Activated CD4-positive, alpha-beta memory T cell treated with anti-CD3 and anti-CD28 coated beads for 36 hours (primary cell): ENCODE measurements at regions of chr14 and their contacts with region 1.

Region 1: GRCh38 chr14:24160850-24161804 is at the start of gene IRF9:
- DNase-seq: peak; percentile 99
- H3K4me3 Mint-ChIP-seq: peak within 1 kb of the TSS; percentile 97
- H3K27ac Mint-ChIP-seq: peak within 1 kb of the TSS; percentile 100
- H3K4me1 Mint-ChIP-seq: peaks cover 37% of the 10 kb centered on the region
- H3K27me3 Mint-ChIP-seq: no peaks in the 10 kb centered on the region
- total RNA-seq, gene IRF9: 158 to 172 TPM

Region 2: GRCh38 chr14:24058260-24058950 is 102.7 kb before region 1 on chr14:
- CTCF ChIA-PET with region 1: interaction called, 47 read pairs
- POLR2A ChIA-PET with region 1: interaction called, 3 read pairs
- intact Hi-C with region 1: loop called (anchors 1 kb)
- DNase-seq: peak; percentile 83
- H3K4me3 Mint-ChIP-seq: no peak overlapping the region
- H3K27ac Mint-ChIP-seq: peak overlapping the region; percentile 4
- H3K4me1 Mint-ChIP-seq: peaks cover 7% of the 10 kb centered on the region
- H3K27me3 Mint-ChIP-seq: peaks cover 4% of the 10 kb centered on the region

Region 3: GRCh38 chr14:24114536-24115450 is 46.3 kb before region 1 on chr14 and contains the starts of genes DCAF11 and NRL:
- CTCF ChIA-PET with region 1: interaction called, 50 read pairs
- POLR2A ChIA-PET with region 1: interaction called, 35 read pairs
- intact Hi-C with region 1: loop called (anchors 1 kb)
- DNase-seq: peak; percentile 99
- H3K4me3 Mint-ChIP-seq: peak within 1 kb of the TSS; percentile 95
- H3K27ac Mint-ChIP-seq: peak within 1 kb of the TSS; percentile 100
- H3K4me1 Mint-ChIP-seq: peaks cover 24% of the 10 kb centered on the region
- H3K27me3 Mint-ChIP-seq: no peaks in the 10 kb centered on the region
- total RNA-seq, gene DCAF11: 85.6 to 91.8 TPM
- total RNA-seq, gene NRL: 1.2 to 1.9 TPM

Region 4: GRCh38 chr14:24146978-24147760 is 14.0 kb before region 1 on chr14 and contains the start of gene RNF31:
- CTCF ChIA-PET with region 1: interaction called, 76 read pairs
- POLR2A ChIA-PET with region 1: interaction called, 60 read pairs
- intact Hi-C with region 1: loop called (anchors 1 kb)
- DNase-seq: peak; percentile 99
- H3K4me3 Mint-ChIP-seq: peak within 1 kb of the TSS; percentile 100
- H3K27ac Mint-ChIP-seq: peak within 1 kb of the TSS; percentile 99
- H3K4me1 Mint-ChIP-seq: peaks cover 56% of the 10 kb centered on the region
- H3K27me3 Mint-ChIP-seq: no peaks in the 10 kb centered on the region
- total RNA-seq, gene RNF31: 75.5 to 80.4 TPM

Region 5: GRCh38 chr14:24188251-24189058 is 27.3 kb after region 1 on chr14 and contains the start of gene IPO4:
- CTCF ChIA-PET with region 1: interaction called, 18 read pairs
- POLR2A ChIA-PET with region 1: interaction called, 26 read pairs
- intact Hi-C with region 1: loop called (anchors 1 kb)
- DNase-seq: peak; percentile 97
- H3K4me3 Mint-ChIP-seq: peak within 1 kb of the TSS; percentile 89
- H3K27ac Mint-ChIP-seq: peak within 1 kb of the TSS; percentile 74
- H3K4me1 Mint-ChIP-seq: peaks cover 40% of the 10 kb centered on the region
- H3K27me3 Mint-ChIP-seq: no peaks in the 10 kb centered on the region
- total RNA-seq, gene IPO4: 69.5 to 72.6 TPM

Region 6: DNA sequence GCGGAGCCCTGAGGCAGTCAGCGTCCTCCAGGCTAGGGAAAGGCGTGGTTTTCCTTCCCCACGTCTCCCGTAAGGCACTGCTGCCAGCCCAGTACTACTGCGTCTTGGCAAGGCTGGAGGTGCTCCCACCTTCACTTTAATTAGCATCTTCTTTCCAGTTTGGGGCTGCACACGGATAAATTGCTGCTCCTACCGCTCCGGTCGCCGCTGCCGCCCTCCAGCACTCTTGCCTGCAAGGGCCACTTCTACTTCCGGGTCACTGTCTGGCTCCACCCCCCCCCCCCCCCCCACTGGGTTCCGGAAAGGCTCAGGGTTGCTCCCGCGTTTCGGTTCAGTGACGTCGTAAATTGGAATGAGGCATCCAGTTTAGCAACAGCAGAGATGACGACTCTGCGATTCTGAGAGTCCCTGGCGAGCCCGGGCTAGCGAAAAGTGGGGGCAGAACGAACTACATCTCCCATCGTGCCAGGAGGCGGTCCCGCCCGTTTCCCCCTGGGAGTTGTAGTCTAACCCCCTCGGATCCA is 71.1 kb after region 1 on chr14 and contains the start of gene NEDD8:
- CTCF ChIA-PET with region 1: no interaction called
- POLR2A ChIA-PET with region 1: interaction called, 4 read pairs
- intact Hi-C with region 1: loop called (anchors 1 kb)
- DNase-seq: peak; percentile 96
- H3K4me3 Mint-ChIP-seq: peak within 1 kb of the TSS; percentile 93
- H3K27ac Mint-ChIP-seq: peak within 1 kb of the TSS; percentile 90
- H3K4me1 Mint-ChIP-seq: peaks cover 55% of the 10 kb centered on the region
- H3K27me3 Mint-ChIP-seq: no peaks in the 10 kb centered on the region
- total RNA-seq, gene NEDD8: 202 to 213 TPM

Region 7: DNA sequence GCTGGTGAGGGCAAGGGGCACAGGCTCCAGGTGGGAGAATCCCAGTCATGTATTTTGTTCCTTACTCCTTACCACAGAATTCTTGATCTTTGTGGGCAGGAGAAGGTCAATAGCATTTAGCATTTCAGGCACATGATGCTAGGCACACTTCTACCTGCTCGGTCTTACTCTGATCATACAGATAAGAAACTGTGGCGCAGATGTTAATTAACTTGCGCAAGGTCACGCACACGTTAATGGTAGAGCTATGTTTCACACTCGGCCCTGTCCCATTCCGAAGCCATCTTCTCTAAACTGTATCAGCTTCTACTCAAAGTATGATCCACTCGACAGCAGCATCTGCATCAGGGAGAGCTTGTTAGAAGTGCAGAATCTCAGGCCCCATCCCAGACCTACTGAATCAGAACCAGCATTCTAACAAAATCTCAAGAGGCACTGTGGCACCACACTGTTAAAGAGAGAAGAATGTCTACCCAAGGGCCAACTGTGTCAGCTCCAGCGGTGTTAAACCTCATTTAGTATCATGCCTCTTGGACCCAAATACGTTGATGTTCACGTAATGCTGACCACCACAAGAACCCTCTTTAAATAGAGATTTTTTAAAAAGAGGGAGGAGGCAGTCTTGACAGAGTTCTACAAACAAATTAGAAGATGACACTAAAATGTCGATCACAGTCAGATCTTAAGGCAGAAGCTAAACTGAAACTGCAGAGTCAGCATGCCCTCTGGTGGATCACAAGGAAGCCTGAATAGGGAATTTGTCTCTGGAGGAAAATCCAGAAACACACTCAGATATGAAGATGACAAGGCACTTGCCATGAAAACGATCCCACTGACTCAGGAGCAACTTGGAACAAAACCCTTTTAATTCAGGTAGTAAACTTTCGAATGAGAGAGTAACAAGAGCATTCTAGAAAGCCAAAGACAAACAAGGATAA is 881.5 kb after region 1 on chr14:
- CTCF ChIA-PET with region 1: no interaction called
- POLR2A ChIA-PET with region 1: no interaction called
- intact Hi-C with region 1: no loop called
- DNase-seq: no peak
- H3K4me3 Mint-ChIP-seq: no peak overlapping the region
- H3K27ac Mint-ChIP-seq: no peak overlapping the region
- H3K4me1 Mint-ChIP-seq: no peaks in the 10 kb centered on the region
- H3K27me3 Mint-ChIP-seq: no peaks in the 10 kb centered on the region